Spleen (tissue), 13 donors: ENCODE measurements at regions of chr14 and their contacts with region 1.

Region 1: GRCh38 chr14:84006643-84007155 is 1523.2 kb upstream of the FLRT2 start:
- DNase-seq: no peak
- H3K4me3 ChIP-seq: no peak overlapping the region
- H3K27ac ChIP-seq: no peak overlapping the region
- H3K4me1 ChIP-seq: peaks cover 0 to 4% (median 0%) of the 10 kb centered on the region in 6 donors
- H3K27me3 ChIP-seq: no peaks in the 10 kb centered on the region
- CTCF ChIP-seq: peak in 1 of 11 experiments; percentile 21
- POLR2A ChIP-seq: no peak

Region 2: GRCh38 chr14:84234284-84234683 is 227.6 kb after region 1 on chr14:
- intact Hi-C with region 1: loop called (anchors 10 kb)
- DNase-seq: no peak
- H3K4me3 ChIP-seq: no peak overlapping the region
- H3K27ac ChIP-seq: no peak overlapping the region
- H3K4me1 ChIP-seq: no peaks in the 10 kb centered on the region
- H3K27me3 ChIP-seq: no peaks in the 10 kb centered on the region
- CTCF ChIP-seq: no peak
- POLR2A ChIP-seq: no peak

Region 3: DNA sequence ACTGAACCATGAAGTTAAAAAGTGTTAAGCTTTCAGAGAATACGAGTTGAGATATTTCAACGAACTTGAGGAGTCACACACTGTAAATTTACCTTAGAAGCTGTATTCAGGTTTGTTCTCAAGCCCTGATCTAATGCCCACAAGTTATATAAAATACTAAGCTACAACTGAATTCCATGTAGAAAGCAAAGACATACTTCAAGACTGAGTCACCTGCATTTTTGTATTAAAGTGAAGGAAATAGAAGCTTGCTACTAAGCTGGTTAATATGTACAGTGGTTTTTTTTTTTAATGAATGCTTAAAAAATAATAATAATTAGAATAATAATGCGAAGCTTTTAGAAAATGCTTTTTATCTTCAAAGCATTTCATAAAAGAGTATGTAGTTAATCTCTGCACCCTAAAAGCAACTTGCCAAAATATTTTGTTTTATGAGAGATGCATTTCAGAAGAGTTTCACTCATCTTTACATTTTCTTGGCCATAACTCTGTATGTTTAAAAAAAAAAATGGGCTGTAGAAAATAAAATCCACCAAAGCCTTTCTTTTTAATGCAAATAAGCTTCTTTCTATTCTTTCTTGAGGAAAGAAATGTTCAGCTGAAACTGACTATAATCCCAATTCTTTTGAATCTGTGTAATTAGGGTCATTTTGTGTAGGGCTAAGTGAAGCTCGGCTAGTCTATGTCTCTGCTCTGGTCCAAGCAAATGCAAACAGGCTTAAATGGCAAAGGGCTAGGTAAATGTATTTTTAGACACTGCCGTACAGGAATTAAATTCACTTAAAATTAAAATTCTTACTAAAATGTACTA is 475.8 kb after region 1 on chr14:
- intact Hi-C with region 1: no loop called
- DNase-seq: no peak
- H3K4me3 ChIP-seq: no peak overlapping the region
- H3K27ac ChIP-seq: no peak overlapping the region
- H3K4me1 ChIP-seq: no peaks in the 10 kb centered on the region
- H3K27me3 ChIP-seq: no peaks in the 10 kb centered on the region
- CTCF ChIP-seq: no peak
- POLR2A ChIP-seq: no peak